ENCODE measurements at regions of chr17 and their contacts with region 1.

Region 1: DNA sequence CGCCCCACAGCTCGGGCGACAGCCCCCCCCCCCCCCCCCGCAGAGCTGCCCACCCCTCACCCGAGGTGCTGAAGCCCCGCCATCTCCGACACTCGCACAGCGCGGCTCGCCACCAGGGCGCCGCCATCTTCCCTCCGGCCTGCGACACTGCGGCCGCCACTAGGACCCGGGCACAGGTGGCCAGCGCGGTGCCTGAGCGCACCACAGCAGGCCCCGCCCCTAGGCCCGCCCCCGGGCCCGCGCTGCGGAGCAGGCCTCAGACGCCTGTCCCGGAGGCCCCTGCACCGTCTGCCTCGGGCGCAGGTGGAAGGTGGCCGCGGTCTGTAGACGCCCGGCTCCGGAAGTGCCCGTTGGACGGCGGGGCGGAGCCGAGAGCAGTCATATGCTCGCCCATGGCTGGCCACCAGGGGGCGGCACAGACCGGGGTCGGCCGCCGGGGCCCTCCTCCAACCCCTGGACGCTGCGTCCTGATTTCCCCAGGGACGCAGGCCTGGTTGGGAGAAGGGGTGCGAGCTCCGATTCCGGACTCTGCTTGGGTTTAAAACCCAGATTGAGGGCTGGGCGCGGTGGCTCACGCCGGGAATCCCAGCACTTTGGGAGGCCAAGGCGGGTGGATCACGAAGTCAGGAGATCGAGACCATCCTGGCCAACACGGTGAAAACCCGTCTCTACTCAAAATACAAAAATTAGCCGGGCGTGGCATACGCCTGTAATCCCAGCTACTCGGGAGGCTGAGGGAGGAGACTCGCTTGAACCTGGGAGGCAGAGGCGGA is at the start of gene MRPL38:
- DNase-seq: peak; percentile 92 to 99 (median 98)
- ATAC-seq: peak; percentile 95 to 97 (median 96)
- H3K4me3 ChIP-seq: peak within 1 kb of the TSS; percentile 41 to 92 (median 87)
- H3K27ac ChIP-seq: peak within 1 kb of the TSS; percentile 88 to 93 (median 90)
- H3K4me1 ChIP-seq: peaks cover 0 to 15% (median 13%) of the 10 kb centered on the region in 3 donors
- H3K27me3 ChIP-seq: no peaks in the 10 kb centered on the region
- CTCF ChIP-seq: peak; percentile 97 to 100 (median 98)
- total RNA-seq, gene MRPL38: 40.6 to 59.9 (median 45.9) TPM

Region 2: DNA sequence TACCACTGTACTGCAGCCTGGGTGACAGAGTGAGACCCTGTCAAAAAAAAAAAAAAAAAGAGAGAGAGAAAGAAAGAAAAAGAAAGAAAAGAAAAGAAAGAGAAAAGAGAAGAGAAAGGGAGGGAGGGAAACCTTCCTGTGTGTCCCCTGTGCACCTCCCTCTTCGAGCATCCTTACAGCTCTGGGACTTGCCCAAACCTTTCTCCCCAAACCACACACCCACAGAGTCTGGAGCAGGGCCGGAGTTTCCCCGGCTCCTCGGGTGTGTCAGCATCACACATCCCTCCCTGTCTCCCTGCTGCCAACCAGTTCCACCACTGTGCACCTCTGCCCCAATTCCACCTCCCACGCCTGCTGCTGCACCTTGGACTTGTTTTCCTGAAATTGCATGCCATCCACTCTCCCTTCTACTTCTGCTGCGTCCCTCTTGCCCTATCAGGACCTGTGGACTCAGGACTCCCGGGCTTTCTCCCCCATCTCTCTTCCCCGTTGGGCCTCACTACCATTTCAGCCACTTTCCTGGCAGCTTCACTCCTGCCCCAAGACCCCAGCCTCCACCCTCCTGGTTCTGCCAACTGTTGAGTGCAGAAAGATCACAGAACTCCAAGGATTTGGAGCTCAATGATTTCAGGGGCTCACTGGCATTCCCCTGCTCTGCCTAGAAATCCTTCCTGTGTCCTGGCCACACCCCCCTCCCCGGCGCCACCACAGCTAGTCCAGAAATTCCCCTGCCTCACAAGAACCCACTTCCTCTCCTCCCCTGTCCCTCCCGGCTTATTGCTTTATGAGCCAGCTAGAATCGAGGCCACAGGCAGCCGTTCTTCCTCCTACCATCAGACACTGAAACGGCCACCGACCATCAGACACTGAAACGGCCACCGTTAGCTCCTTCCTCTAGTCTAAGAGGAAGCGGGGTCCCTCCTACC is 92.0 kb after region 1 on chr17:
- intact Hi-C with region 1: loop called in 1 of 3 experiments (anchors 10 kb)
- DNase-seq: peak in 2 of 6 donors; percentile 28 to 42
- ATAC-seq: peak in 3 of 4 donors; percentile 16 to 46 (median 39)
- H3K4me3 ChIP-seq: no peak overlapping the region
- H3K27ac ChIP-seq: no peak overlapping the region
- H3K4me1 ChIP-seq: peaks cover 0 to 8% (median 6%) of the 10 kb centered on the region in 3 donors
- H3K27me3 ChIP-seq: no peaks in the 10 kb centered on the region
- CTCF ChIP-seq: no peak

Region 3: GRCh38 chr17:76005263-76006149 is 100.6 kb after region 1 on chr17:
- intact Hi-C with region 1: loop called in 2 of 3 experiments (anchors 2 to 5 kb)
- DNase-seq: peak; percentile 77 to 94 (median 84)
- ATAC-seq: peak; percentile 45 to 68 (median 64)
- H3K4me3 ChIP-seq: no peak overlapping the region
- H3K27ac ChIP-seq: no peak overlapping the region
- H3K4me1 ChIP-seq: peaks cover 4 to 19% (median 14%) of the 10 kb centered on the region in 3 donors
- H3K27me3 ChIP-seq: no peaks in the 10 kb centered on the region
- CTCF ChIP-seq: peak; percentile 54 to 78 (median 72)

Measured in pancreas (tissue), 10 donors.